ENCODE measurements at regions of chr7 and their contacts with region 1.

Region 1: DNA sequence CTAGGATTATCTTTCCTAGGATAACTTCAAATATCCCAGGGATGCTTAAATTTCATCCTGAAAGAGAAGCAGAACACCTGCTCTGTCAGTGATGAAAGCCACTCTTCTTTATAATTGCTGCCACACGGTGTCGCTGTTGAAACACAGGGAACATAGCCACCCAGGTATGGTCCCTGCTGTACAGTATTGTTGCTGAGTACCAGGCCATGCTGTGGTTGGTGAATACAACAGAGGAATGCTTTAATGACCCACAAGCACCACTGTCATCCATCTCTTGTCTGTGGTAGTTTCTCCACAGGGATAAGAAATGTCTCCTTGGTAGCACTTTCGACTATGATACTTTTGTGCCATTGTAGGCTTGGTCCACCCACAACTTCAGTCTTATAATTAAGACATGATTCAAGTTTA is 70.6 kb upstream of the STARD3NL start:
- DNase-seq: peak; percentile 84
- ATAC-seq: peak; percentile 87
- H3K4me3 Mint-ChIP-seq: no peak overlapping the region
- H3K27ac Mint-ChIP-seq: no peak overlapping the region
- H3K4me1 Mint-ChIP-seq: peaks cover 2% of the 10 kb centered on the region
- H3K27me3 Mint-ChIP-seq: peaks cover 8% of the 10 kb centered on the region
- CTCF ChIP-seq: peak; percentile 86

Region 2: GRCh38 chr7:37901236-37901827 is 206.2 kb before region 1 on chr7:
- CTCF ChIA-PET with region 1: interaction called, 4 read pairs
- POLR2A ChIA-PET with region 1: no interaction called
- intact Hi-C with region 1: loop called (anchors 10 kb)
- DNase-seq: no peak
- ATAC-seq: peak; percentile 42
- H3K4me3 Mint-ChIP-seq: no peak overlapping the region
- H3K27ac Mint-ChIP-seq: no peak overlapping the region
- H3K4me1 Mint-ChIP-seq: no peaks in the 10 kb centered on the region
- H3K27me3 Mint-ChIP-seq: peaks cover 2% of the 10 kb centered on the region
- CTCF ChIP-seq: no peak

Region 3: GRCh38 chr7:38222481-38223096 is 115.1 kb after region 1 on chr7:
- CTCF ChIA-PET with region 1: interaction called, 94 read pairs
- POLR2A ChIA-PET with region 1: no interaction called
- intact Hi-C with region 1: loop called (anchors 1 kb)
- DNase-seq: no peak
- ATAC-seq: peak; percentile 61
- H3K4me3 Mint-ChIP-seq: no peak overlapping the region
- H3K27ac Mint-ChIP-seq: peak overlapping the region; percentile 37
- H3K4me1 Mint-ChIP-seq: peaks cover 36% of the 10 kb centered on the region
- H3K27me3 Mint-ChIP-seq: no peaks in the 10 kb centered on the region
- CTCF ChIP-seq: peak; percentile 90

Region 4: DNA sequence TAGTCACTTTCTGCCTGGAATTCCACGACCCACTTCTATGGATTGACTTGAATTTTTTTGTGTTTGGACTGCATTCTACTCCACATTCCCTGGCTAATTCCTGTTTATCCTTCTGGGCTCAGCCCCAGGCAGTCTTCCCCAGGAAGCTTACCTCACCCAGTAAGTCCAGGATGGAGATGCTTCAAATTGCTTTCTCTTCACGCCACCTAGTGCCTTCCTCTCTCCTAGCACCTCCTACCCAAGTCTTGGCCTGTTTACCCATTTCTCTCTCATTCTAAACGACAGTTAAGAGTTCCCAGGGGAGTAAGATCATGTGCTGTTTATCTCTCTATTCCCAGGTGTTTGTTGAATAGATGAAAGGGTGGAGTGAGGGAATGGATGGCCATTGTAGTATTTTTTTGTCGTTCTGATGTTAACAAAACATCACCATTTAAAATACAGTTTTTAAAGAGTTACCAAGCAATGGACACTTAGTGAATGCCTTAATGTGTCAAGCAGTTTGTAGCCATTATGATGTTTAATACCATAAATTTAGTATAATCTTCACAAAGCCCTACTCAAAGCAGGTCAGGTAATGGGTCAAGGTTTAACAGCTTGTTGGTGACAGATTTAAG is 211.4 kb after region 1 on chr7:
- CTCF ChIA-PET with region 1: interaction called, 9 read pairs
- POLR2A ChIA-PET with region 1: no interaction called
- intact Hi-C with region 1: loop called (anchors 5 kb)
- DNase-seq: peak; percentile 46
- ATAC-seq: peak; percentile 66
- H3K4me3 Mint-ChIP-seq: peak overlapping the region; percentile 66
- H3K27ac Mint-ChIP-seq: peak overlapping the region; percentile 86
- H3K4me1 Mint-ChIP-seq: peaks cover 58% of the 10 kb centered on the region
- H3K27me3 Mint-ChIP-seq: no peaks in the 10 kb centered on the region
- CTCF ChIP-seq: peak; percentile 49